ENCODE measurements at regions of chr13 and their contacts with region 1.

Region 1: GRCh38 chr13:77184455-77184854 is 142.4 kb downstream of the MYCBP2 start:
- DNase-seq: peak; percentile 23
- ATAC-seq: peak; percentile 97
- H3K4me3 Mint-ChIP-seq: peak overlapping the region; percentile 61
- H3K27ac Mint-ChIP-seq: peak overlapping the region; percentile 95
- H3K4me1 Mint-ChIP-seq: peaks cover 28% of the 10 kb centered on the region
- H3K27me3 Mint-ChIP-seq: no peaks in the 10 kb centered on the region
- CTCF ChIP-seq: no peak

Region 2: DNA sequence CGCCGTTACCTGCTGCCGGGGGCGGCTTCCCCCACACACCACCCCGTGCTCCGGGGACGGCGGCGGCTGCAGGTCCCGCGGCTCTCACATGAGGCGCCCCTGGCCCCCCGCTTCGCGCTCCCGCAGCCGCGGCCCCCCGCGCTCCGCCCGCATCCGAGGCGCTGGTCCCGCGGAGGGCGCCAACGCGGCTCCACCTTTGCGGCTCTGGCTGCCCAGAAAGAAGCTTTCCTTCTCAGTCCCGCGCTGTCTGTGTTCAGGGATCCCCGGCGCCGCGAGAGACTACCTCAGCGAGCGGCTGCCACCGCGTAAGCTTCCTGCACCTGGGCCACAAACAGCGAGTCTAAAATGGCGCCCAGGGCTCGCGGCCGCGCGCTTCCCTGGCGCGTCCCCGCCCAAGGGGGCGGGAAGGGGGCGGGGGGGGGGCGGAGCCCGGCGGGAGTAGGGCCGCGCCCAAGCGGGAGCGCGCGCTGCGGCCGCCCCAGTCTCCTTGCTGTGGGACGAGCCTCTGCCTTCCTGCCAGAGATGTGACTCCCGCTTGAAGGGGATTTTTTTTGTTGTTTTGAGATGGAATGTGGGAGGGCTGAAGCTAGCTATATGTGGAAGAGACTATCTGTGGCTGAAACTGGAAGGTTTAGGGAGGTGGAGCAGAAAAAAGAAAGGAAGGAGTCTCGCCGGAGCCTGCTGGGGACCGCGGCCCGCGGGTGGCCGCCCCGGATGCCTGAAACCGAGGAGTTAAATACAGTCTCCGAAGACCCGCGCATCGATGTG is 157.5 kb before region 1 on chr13 and contains the start of gene FBXL3:
- CTCF ChIA-PET with region 1: no interaction called
- POLR2A ChIA-PET with region 1: interaction called, 5 read pairs
- intact Hi-C with region 1: loop called (anchors 1 kb)
- DNase-seq: peak; percentile 73
- ATAC-seq: peak; percentile 59
- H3K4me3 Mint-ChIP-seq: peak within 1 kb of the TSS; percentile 98
- H3K27ac Mint-ChIP-seq: peak within 1 kb of the TSS; percentile 96
- H3K4me1 Mint-ChIP-seq: peaks cover 54% of the 10 kb centered on the region
- H3K27me3 Mint-ChIP-seq: no peaks in the 10 kb centered on the region
- CTCF ChIP-seq: no peak
- total RNA-seq, gene FBXL3: 46.2 and 49.8 TPM in 2 replicates

Region 3: DNA sequence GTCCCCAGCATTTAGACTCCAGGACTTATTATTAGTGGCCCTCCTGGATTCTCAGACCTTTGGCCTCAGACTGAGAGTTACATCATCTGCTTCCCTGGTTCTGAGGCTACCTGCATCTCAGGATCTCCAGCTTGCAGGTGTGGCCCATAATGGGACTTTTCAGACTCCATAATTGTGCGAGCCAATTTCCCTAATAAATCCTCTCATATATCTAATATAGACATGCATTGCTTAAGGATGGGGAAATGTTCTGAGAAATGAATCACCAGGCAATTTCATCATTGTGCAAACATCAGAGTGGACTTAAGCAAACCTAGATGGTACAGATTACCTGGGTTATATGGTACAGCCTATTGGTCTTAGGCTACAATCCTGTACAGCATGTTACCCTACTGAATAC is 41.0 kb before region 1 on chr13:
- CTCF ChIA-PET with region 1: no interaction called
- POLR2A ChIA-PET with region 1: no interaction called
- intact Hi-C with region 1: loop called (anchors 5 kb)
- DNase-seq: no peak
- ATAC-seq: no peak
- H3K4me3 Mint-ChIP-seq: no peak overlapping the region
- H3K27ac Mint-ChIP-seq: no peak overlapping the region
- H3K4me1 Mint-ChIP-seq: no peaks in the 10 kb centered on the region
- H3K27me3 Mint-ChIP-seq: no peaks in the 10 kb centered on the region
- CTCF ChIP-seq: no peak

Region 4: DNA sequence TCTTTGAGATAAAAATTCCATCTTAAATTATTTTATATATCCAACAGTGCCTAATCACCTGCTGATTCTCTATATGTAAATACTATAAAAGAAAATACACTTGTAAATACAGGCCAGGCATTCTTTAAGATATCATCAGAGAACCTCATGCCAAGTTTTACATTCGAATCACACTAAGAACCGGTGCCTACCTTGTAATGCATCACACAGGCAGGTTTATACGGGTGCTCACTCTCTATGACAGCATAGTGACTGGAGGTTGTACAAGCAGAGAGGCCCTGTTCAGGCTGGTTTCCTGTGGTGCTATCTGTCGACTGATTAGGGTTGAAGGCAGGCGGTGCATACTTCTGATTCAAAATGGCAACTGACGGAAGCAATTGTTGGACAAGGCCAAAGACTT is 16.2 kb before region 1 on chr13:
- CTCF ChIA-PET with region 1: no interaction called
- POLR2A ChIA-PET with region 1: no interaction called
- intact Hi-C with region 1: no loop called
- DNase-seq: no peak
- ATAC-seq: no peak
- H3K4me3 Mint-ChIP-seq: no peak overlapping the region
- H3K27ac Mint-ChIP-seq: no peak overlapping the region
- H3K4me1 Mint-ChIP-seq: no peaks in the 10 kb centered on the region
- H3K27me3 Mint-ChIP-seq: no peaks in the 10 kb centered on the region
- CTCF ChIP-seq: no peak

Region 5: GRCh38 chr13:77274126-77274525 is 89.7 kb after region 1 on chr13:
- CTCF ChIA-PET with region 1: no interaction called
- POLR2A ChIA-PET with region 1: interaction called, 11 read pairs
- intact Hi-C with region 1: no loop called
- DNase-seq: no peak
- ATAC-seq: no peak
- H3K4me3 Mint-ChIP-seq: no peak overlapping the region
- H3K27ac Mint-ChIP-seq: peak overlapping the region; percentile 59
- H3K4me1 Mint-ChIP-seq: peaks cover 20% of the 10 kb centered on the region
- H3K27me3 Mint-ChIP-seq: no peaks in the 10 kb centered on the region
- CTCF ChIP-seq: no peak